Adrenal gland (tissue), 19 donors: ENCODE measurements at regions of chr6 and their contacts with region 1.

Region 1: DNA sequence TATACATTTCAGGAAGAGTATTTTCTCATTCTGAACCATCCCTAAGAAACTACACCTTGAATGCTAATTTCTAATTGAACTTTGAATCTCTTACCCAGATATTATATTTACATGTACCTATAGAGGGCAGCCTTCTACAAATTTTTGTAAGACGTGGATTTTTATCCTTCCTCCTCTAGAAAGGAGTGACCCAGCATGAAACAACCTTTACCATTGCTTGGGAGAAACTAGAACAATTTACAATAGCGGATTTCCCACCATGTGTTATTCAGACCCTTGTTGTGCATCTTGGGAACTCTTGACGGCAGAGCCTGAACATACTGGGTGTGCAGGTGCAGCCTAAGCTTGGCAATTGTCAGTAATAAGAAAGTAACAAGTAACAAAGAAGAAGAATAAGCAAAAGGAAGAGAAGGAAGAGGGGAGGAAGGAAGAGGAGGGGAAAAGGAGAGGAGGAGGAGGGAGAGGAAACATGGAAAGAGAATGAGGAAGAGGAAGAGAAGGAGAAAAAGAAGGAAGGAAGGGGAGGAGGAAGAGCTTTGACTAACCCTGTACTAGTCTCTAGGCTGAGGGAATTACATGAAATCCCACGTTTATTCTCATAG is 10.8 kb upstream of the TAAR1 start:
- DNase-seq: no peak
- H3K4me3 ChIP-seq: no peak overlapping the region
- H3K27ac ChIP-seq: no peak overlapping the region
- H3K4me1 ChIP-seq: peaks cover 0 to 6% of the 10 kb centered on the region in 2 donors
- H3K27me3 ChIP-seq: no peaks in the 10 kb centered on the region
- CTCF ChIP-seq: peak; percentile 44 to 71 (median 61)
- POLR2A ChIP-seq: no peak

Region 2: GRCh38 chr6:132527791-132528190 is 142.0 kb before region 1 on chr6:
- intact Hi-C with region 1: loop called in 1 of 2 experiments (anchors 10 kb)
- DNase-seq: no peak
- H3K4me3 ChIP-seq: no peak overlapping the region
- H3K27ac ChIP-seq: no peak overlapping the region
- H3K4me1 ChIP-seq: peaks cover 0 to 5% of the 10 kb centered on the region in 2 donors
- H3K27me3 ChIP-seq: no peaks in the 10 kb centered on the region
- CTCF ChIP-seq: no peak
- POLR2A ChIP-seq: no peak

Region 3: DNA sequence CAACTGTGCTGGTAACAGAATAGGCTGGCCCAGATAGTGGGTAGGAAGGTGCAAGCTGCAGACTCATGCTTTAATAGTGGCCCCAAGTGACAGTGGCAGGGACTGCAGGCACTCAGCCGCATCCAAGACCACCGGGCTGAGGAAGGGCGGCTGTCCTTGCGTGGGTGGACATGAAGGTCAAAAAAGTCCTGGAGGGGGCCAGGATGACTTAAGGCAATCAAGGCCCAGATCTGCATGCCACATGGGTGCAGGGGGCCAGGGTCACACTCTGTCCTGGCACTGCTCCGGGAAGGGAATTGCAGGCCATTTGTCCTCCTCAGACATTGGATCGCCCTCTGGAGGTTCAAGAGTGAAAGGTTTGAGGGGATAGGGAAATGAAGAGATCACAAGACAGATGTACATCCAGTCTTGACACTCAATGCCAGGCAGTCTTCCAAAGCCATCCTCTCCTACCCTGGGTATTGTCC is 98.3 kb after region 1 on chr6:
- intact Hi-C with region 1: loop called (anchors 10 kb)
- DNase-seq: peak; percentile 33 to 59 (median 43)
- H3K4me3 ChIP-seq: no peak overlapping the region
- H3K27ac ChIP-seq: no peak overlapping the region
- H3K4me1 ChIP-seq: peaks cover 0 to 3% of the 10 kb centered on the region in 2 donors
- H3K27me3 ChIP-seq: no peaks in the 10 kb centered on the region
- CTCF ChIP-seq: peak; percentile 38 to 86 (median 62)
- POLR2A ChIP-seq: no peak